Adrenal gland (tissue), 19 donors: ENCODE measurements at regions of chr3 and their contacts with region 1.

Region 1: GRCh38 chr3:136772709-136773108 is 20.5 kb upstream of the STAG1 start:
- DNase-seq: no peak
- H3K4me3 ChIP-seq: no peak overlapping the region
- H3K27ac ChIP-seq: no peak overlapping the region
- H3K4me1 ChIP-seq: no peaks in the 10 kb centered on the region
- H3K27me3 ChIP-seq: no peaks in the 10 kb centered on the region
- CTCF ChIP-seq: no peak
- POLR2A ChIP-seq: no peak

Region 2: GRCh38 chr3:136899622-136900158 is 127.0 kb after region 1 on chr3:
- intact Hi-C with region 1: no loop called
- DNase-seq: no peak
- H3K4me3 ChIP-seq: no peak overlapping the region
- H3K27ac ChIP-seq: no peak overlapping the region
- H3K4me1 ChIP-seq: peaks cover 0 to 19% of the 10 kb centered on the region in 2 donors
- H3K27me3 ChIP-seq: no peaks in the 10 kb centered on the region
- CTCF ChIP-seq: no peak
- POLR2A ChIP-seq: no peak

Region 3: GRCh38 chr3:136994772-136995516 is 222.2 kb after region 1 on chr3:
- intact Hi-C with region 1: loop called in 1 of 2 experiments (anchors 10 kb)
- DNase-seq: peak; percentile 75 to 92 (median 83)
- H3K4me3 ChIP-seq: no peak overlapping the region
- H3K27ac ChIP-seq: peak overlapping the region in 4 of 5 donors; percentile 24 to 77 (median 52)
- H3K4me1 ChIP-seq: peaks cover 5 to 11% of the 10 kb centered on the region in 2 donors
- H3K27me3 ChIP-seq: no peaks in the 10 kb centered on the region
- CTCF ChIP-seq: no peak
- POLR2A ChIP-seq: no peak